Posterior vena cava (tissue), 2 donors: ENCODE measurements at regions of chr18 and their contacts with region 1.

Region 1: GRCh38 chr18:48222118-48222517 is 187.1 kb downstream of the ZBTB7C start:
- DNase-seq: no peak

Region 2: GRCh38 chr18:48188609-48189008 is 33.5 kb before region 1 on chr18:
- intact Hi-C with region 1: loop called in 1 of 2 experiments (anchors 1 kb)
- DNase-seq: peak; percentile 6

Region 3: GRCh38 chr18:48445540-48445939 is 223.4 kb after region 1 on chr18:
- intact Hi-C with region 1: loop called in 1 of 2 experiments (anchors 10 kb)
- DNase-seq: peak; percentile 89